Heart right ventricle (tissue), 16 donors: ENCODE measurements at regions of chr15 and their contacts with region 1.

Region 1: GRCh38 chr15:62792986-62793751 is 249.4 kb upstream of the TPM1 start:
- DNase-seq: no peak
- ATAC-seq: no peak
- H3K4me3 ChIP-seq: no peak overlapping the region
- H3K27ac ChIP-seq: no peak overlapping the region
- H3K4me1 ChIP-seq: peaks cover 0 to 5% (median 0%) of the 10 kb centered on the region in 9 donors
- H3K27me3 ChIP-seq: no peaks in the 10 kb centered on the region
- CTCF ChIP-seq: no peak

Region 2: GRCh38 chr15:62426387-62426956 is 366.7 kb before region 1 on chr15:
- intact Hi-C with region 1: no loop called
- DNase-seq: no peak
- ATAC-seq: no peak
- H3K4me3 ChIP-seq: no peak overlapping the region
- H3K27ac ChIP-seq: no peak overlapping the region
- H3K4me1 ChIP-seq: peaks cover 3 to 40% (median 21%) of the 10 kb centered on the region in 9 donors
- H3K27me3 ChIP-seq: no peaks in the 10 kb centered on the region
- CTCF ChIP-seq: no peak

Region 3: DNA sequence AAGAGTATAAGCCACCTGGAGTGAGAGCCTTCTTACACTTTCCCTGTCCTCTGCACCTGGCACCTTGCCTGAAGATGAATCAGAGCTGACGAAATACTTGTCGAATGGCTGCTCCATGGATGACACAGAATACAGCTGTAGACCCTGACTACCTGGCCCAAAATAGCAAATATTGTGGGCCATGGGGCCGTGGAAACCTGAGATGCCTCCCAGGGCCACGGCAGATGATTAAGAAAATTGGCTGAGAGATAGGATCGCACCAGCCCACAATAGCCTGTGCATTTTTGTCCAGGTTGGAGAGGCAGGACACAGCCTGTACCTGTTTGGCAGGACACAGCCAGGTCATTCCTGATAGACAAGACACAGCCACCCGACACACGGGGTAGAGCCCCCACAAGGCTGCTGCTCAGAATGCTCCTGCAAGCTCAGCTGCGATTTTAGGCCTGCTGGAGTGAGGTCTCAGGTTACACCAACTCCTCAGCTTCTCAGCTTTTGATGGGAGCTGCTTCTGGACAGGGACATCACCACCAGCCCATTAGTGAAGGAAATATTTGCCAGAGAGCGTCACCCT is 226.5 kb after region 1 on chr15:
- intact Hi-C with region 1: loop called in 1 of 10 experiments (anchors 10 kb)
- DNase-seq: no peak
- ATAC-seq: peak in 2 of 8 donors; percentile 33 to 63
- H3K4me3 ChIP-seq: no peak overlapping the region
- H3K27ac ChIP-seq: no peak overlapping the region
- H3K4me1 ChIP-seq: peaks cover 0 to 19% (median 11%) of the 10 kb centered on the region in 9 donors
- H3K27me3 ChIP-seq: no peaks in the 10 kb centered on the region
- CTCF ChIP-seq: no peak